HEK293 (cell line): ENCODE measurements at regions of chr20 and their contacts with region 1.

Region 1: DNA sequence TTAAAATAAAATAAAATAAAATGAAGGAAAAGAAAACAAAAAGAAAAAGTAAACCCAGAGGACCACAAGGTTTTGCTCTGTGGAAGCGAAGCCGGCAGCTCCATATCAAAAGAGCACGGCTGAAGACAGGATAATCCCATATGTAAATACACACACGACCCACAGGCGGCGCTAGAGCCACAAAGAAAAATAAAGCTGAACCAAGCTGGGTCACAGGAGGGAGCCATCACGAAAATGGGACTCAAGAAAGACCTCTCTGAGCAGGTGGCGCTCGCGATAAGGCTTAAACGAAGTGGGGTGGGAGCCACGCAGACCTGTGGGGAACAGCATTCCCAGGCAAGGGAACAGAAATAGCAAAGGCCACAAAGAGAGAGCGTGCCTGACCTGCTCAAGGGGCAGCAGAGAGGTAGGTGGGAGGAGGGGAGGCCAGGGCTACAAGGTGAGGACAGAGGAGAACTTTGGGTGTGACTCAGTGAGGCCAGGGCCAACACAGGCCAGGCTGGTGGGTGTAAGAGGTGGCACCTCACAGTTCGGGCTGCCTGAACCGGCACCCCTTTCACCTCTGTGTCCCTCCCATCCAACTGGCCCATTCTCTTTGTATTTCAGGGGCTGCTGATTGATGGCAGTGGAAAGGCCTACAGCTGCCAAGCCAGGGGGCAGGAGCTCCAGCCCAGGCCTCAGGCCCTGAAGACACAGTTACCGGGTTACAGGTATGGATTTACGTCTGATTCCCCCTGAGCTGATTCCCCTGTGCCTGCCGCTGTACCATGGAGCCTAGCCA is 26.0 kb downstream of the PTGIS start:
- H3K4me3 ChIP-seq: no peak overlapping the region
- H3K27ac ChIP-seq: no peak overlapping the region
- H3K4me1 ChIP-seq: no peaks in the 10 kb centered on the region
- CTCF ChIP-seq: peak; percentile 88

Region 2: DNA sequence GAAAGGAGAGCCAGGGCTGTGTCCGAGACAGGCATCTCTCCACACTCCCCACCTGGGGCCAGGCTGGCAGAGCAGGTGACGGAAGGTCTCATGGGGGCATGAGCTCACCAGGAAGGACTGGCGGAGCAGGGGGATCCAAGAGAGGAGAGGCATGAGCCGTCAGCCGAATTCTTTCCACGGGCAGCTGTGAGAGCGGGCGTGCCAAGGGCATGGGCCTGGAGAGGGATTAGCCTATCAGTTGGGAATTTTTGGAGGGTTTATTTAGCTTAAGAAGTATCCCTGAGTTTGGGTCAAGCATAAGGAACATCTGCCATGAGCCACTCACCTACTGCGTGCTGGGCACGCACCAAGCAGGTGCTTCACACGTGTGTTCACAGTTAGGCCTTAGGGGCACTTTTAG is 203.9 kb before region 1 on chr20:
- CTCF ChIA-PET with region 1: interaction called, 69 read pairs
- POLR2A ChIA-PET with region 1: no interaction called
- H3K4me3 ChIP-seq: no peak overlapping the region
- H3K27ac ChIP-seq: no peak overlapping the region
- H3K4me1 ChIP-seq: no peaks in the 10 kb centered on the region
- CTCF ChIP-seq: no peak

Region 3: GRCh38 chr20:49508435-49509199 is 33.3 kb before region 1 on chr20:
- CTCF ChIA-PET with region 1: interaction called, 18 read pairs
- POLR2A ChIA-PET with region 1: no interaction called
- H3K4me3 ChIP-seq: no peak overlapping the region
- H3K27ac ChIP-seq: no peak overlapping the region
- H3K4me1 ChIP-seq: no peaks in the 10 kb centered on the region
- CTCF ChIP-seq: peak; percentile 57

Region 4: GRCh38 chr20:49559401-49560081 is 17.6 kb after region 1 on chr20:
- CTCF ChIA-PET with region 1: interaction called, 29 read pairs
- POLR2A ChIA-PET with region 1: no interaction called
- H3K4me3 ChIP-seq: no peak overlapping the region
- H3K27ac ChIP-seq: no peak overlapping the region
- H3K4me1 ChIP-seq: no peaks in the 10 kb centered on the region
- CTCF ChIP-seq: no peak

Region 5: GRCh38 chr20:49595811-49596561 is 54.1 kb after region 1 on chr20:
- CTCF ChIA-PET with region 1: interaction called, 16 read pairs
- POLR2A ChIA-PET with region 1: interaction called, 3 read pairs
- H3K4me3 ChIP-seq: no peak overlapping the region
- H3K27ac ChIP-seq: no peak overlapping the region
- H3K4me1 ChIP-seq: no peaks in the 10 kb centered on the region
- CTCF ChIP-seq: no peak

Region 6: GRCh38 chr20:49846206-49846807 is 304.4 kb after region 1 on chr20:
- CTCF ChIA-PET with region 1: interaction called, 19 read pairs
- POLR2A ChIA-PET with region 1: no interaction called
- H3K4me3 ChIP-seq: no peak overlapping the region
- H3K27ac ChIP-seq: no peak overlapping the region
- H3K4me1 ChIP-seq: no peaks in the 10 kb centered on the region
- CTCF ChIP-seq: no peak

Region 7: DNA sequence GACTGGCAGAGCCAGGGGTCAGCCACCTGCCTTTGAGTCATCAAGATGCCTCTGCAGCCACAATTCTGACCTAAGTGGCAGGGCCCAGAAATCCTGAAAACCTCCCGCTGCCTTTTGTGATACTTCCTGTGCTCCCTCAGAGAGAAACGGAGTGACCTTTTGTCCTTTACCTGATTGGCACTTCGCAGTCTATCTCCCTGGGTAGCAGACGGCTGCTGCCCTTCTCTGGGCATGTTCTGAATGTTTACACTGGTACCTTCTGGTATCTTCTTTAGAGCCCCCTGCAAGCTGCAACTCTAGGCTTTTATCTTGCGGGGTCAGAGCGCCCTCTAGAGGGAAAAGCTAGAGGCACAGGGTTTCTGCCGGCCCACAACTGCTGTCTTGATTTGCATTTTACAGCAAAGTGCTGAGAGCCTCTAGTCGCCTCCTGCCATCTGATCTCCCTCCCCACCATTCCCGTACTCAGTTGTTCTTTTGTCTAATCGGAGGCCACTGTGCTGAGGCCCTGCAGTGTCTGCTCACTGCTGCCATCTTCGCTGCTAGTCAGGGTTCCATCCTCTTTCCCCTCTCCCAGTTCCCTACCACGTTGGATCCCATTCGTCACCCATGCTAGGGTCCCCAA is 346.5 kb after region 1 on chr20:
- CTCF ChIA-PET with region 1: interaction called, 29 read pairs
- POLR2A ChIA-PET with region 1: no interaction called
- H3K4me3 ChIP-seq: no peak overlapping the region
- H3K27ac ChIP-seq: no peak overlapping the region
- H3K4me1 ChIP-seq: no peaks in the 10 kb centered on the region
- CTCF ChIP-seq: peak; percentile 85